GM12878 (cell line): ENCODE measurements at regions of chr14 and their contacts with region 1.

Region 1: DNA sequence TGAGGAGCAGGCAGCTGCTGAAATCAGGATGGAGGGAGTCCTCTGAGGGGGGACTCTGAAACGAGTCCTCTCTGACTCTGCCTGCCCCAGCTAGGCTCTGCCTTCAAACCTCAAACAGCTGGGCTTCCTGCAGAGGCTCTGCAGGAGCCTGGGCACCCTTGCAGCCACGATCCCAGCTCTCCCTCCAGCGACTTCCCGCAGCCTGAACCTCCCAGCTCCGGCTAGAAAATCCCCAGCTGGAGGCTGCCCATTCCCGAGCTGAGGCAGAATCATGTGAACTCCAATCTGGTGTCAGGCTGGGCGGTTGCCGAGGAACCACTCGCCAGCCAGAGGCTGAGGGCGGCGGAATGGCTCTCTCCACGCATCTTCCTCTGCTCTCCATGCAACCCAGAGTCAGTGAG is at the start of gene GPR68:
- DNase-seq: no peak
- ATAC-seq: 0 out of 3 replicates have a peak, but pooled peaks have one; percentile 2
- H3K4me3 ChIP-seq: peak within 1 kb of the TSS; percentile 16
- H3K27ac ChIP-seq: peak within 1 kb of the TSS; percentile 86
- H3K4me1 ChIP-seq: peaks cover 32% of the 10 kb centered on the region
- H3K27me3 ChIP-seq: no peaks in the 10 kb centered on the region
- CTCF ChIP-seq: no peak
- EP300 ChIP-seq: no peak
- POLR2A ChIP-seq: no peak
- RAD21 ChIP-seq: no peak
- polyA plus RNA-seq, gene GPR68: 0.06 to 0.35 TPM

Region 2: GRCh38 chr14:91228112-91229004 is 16.1 kb before region 1 on chr14:
- CTCF ChIA-PET with region 1: interaction called, 59 read pairs
- POLR2A ChIA-PET with region 1: interaction called, 108 read pairs
- RAD21 ChIA-PET with region 1: interaction called, 90 read pairs
- SMC1A ChIA-PET with region 1: interaction called, 142 read pairs
- in situ Hi-C with region 1: no loop called
- intact Hi-C with region 1: loop called (anchors 1 kb)
- DNase-seq: peak; percentile 86
- ATAC-seq: peak; percentile 89
- H3K4me3 ChIP-seq: 0 out of 2 replicates have a peak overlapping the region, but pooled peaks have one; percentile 4
- H3K27ac ChIP-seq: peak overlapping the region; percentile 92
- H3K4me1 ChIP-seq: peaks cover 53% of the 10 kb centered on the region
- H3K27me3 ChIP-seq: no peaks in the 10 kb centered on the region
- CTCF ChIP-seq: no peak
- EP300 ChIP-seq: peak; percentile 37 to 78; a peak in 2 of 4 replicates
- POLR2A ChIP-seq: peak; percentile 63
- RAD21 ChIP-seq: no peak

Region 3: DNA sequence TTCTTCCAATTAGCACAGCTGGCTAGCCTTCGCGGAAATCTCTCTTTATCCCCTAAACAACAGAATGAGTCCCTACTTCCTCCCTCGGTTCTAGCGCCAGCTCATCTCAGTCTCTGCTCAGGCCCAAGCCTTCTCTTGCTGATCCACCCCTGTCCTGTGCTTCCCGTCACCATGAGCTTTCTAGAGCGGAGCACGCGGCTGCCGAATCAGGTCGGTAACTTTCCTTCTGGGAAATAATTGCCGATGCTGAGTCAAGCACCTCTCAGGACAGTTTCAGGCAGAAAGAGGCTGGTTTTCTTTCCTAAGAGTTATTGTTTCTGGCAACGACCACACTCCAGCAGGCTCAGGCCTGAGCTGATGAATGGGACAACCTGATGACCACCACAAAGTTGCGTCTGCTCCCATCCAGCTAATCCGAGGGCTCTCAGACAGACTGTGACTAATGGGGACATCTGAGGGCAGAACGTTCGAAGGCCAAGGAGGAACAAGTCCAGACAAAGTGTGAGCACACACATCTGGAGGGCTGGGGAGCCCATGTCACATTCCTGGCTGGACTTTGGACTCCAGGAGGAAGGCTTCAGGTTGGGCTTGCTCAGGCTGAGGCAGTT is 13.6 kb after region 1 on chr14:
- CTCF ChIA-PET with region 1: interaction called, 19 read pairs
- POLR2A ChIA-PET with region 1: interaction called, 5 read pairs
- RAD21 ChIA-PET with region 1: interaction called, 31 read pairs
- SMC1A ChIA-PET with region 1: interaction called, 27 read pairs
- in situ Hi-C with region 1: no loop called
- intact Hi-C with region 1: no loop called
- DNase-seq: no peak
- ATAC-seq: no peak
- H3K4me3 ChIP-seq: no peak overlapping the region
- H3K27ac ChIP-seq: no peak overlapping the region
- H3K4me1 ChIP-seq: peaks cover 9% of the 10 kb centered on the region
- H3K27me3 ChIP-seq: no peaks in the 10 kb centered on the region
- CTCF ChIP-seq: no peak
- EP300 ChIP-seq: no peak
- POLR2A ChIP-seq: no peak
- RAD21 ChIP-seq: no peak